Mammary epithelial cell (primary cell): ENCODE measurements at regions of chr3 and their contacts with region 1.

Region 1: GRCh38 chr3:23888617-23889228 is 28.1 kb downstream of the NKIRAS1 start:
- DNase-seq: no peak
- H3K4me3 ChIP-seq: no peak overlapping the region
- H3K27ac ChIP-seq: no peak overlapping the region
- H3K4me1 ChIP-seq: no peaks in the 10 kb centered on the region
- H3K27me3 ChIP-seq: no peaks in the 10 kb centered on the region
- CTCF ChIP-seq: peak; percentile 70 to 83

Region 2: DNA sequence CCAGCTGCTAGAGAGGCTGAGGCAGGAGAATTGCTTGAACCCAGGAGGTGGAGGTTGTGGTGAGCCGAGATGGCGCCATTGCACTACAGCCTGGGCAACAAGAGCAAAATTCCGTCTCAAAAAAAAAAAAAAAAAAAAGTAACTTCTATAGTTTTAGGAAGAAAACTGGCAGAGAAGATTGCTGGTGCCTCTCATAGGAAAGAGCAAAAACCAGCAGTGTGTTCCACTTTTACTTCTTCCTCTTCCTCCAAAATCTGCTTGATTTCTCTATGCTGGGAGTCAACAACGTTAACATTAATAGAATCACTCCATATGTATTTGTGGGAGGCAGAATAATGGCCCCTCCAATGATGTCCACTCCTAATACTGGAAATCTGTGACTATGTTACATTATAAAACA is 43.8 kb after region 1 on chr3:
- CTCF ChIA-PET with region 1: no interaction called
- dilution Hi-C with region 1: no loop called
- in situ Hi-C with region 1: no loop called
- intact Hi-C with region 1: no loop called
- DNase-seq: no peak
- H3K4me3 ChIP-seq: no peak overlapping the region
- H3K27ac ChIP-seq: no peak overlapping the region
- H3K4me1 ChIP-seq: no peaks in the 10 kb centered on the region
- H3K27me3 ChIP-seq: no peaks in the 10 kb centered on the region
- CTCF ChIP-seq: no peak

Region 3: DNA sequence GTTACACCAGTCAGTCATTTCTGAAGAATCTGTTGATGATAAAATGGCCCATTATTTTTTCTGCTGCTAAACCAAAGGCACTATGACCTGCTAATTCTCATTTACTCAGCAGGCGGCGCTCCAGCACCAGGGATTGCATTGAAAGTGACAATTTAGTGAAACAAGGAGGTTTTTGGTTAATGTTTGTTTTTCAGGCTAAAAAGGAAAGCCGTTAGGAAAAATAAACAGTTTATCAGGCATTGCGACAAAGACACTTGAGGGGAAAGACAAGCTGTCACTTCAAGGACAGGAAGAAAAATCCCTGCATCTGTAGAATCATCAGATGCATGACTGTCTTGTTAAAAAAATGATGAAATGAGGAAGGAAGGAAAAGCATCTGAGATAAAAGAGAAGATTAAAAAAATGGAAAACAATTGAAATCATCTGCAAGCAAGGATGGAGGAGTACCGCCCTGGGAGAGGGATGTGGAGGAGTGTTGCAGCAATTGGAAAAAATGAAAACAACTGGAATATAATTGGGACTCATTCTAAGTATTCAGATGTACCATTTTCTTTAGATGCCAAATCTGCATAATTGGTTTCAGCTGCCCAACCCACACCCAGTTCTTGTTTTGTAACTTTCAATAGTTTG is 110.4 kb after region 1 on chr3:
- CTCF ChIA-PET with region 1: no interaction called
- dilution Hi-C with region 1: no loop called
- in situ Hi-C with region 1: no loop called
- intact Hi-C with region 1: loop called (anchors 1 kb)
- DNase-seq: peak; percentile 33
- H3K4me3 ChIP-seq: no peak overlapping the region
- H3K27ac ChIP-seq: no peak overlapping the region
- H3K4me1 ChIP-seq: peaks cover under 1% of the 10 kb centered on the region
- H3K27me3 ChIP-seq: no peaks in the 10 kb centered on the region
- CTCF ChIP-seq: peak; percentile 96 to 100